Panc1 (cell line): ENCODE measurements at regions of chr2 and their contacts with region 1.

Region 1: DNA sequence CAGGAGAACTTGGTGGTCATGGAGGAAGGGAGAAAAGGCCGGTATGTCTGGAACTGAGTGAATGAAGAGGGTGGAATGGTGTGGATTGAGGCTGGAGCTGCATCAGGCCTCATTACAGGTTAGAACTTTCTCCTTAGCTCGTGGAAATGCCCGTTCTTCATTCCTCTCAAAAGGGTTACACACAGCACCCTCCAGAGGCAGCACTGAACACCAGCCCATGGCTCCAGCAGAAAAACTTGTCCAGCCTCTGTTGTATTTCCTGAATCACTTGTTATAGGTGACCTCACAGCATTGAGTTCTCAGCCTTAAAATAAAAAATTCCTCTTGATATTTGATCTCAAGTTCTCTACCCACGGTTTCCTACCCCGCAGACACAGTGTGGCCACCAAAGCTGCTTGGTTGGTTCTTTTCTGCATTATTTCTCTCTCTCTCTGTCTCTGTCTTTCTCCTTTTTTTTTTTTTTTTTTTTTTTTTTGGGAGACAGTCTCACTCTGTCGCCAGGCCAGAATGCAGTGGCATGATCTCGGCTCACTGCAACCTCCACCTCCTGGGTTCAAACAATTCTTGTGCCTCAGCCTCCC is 89.6 kb downstream of the ITGB1BP1 start:
- DNase-seq: peak; percentile 55
- ATAC-seq: peak; percentile 82
- H3K4me3 ChIP-seq: no peak overlapping the region
- H3K27ac ChIP-seq: peak overlapping the region; percentile 20
- H3K4me1 ChIP-seq: peaks cover 6% of the 10 kb centered on the region
- H3K27me3 ChIP-seq: no peaks in the 10 kb centered on the region
- CTCF ChIP-seq: peak; percentile 77

Region 2: GRCh38 chr2:9318461-9319337 is 15.0 kb before region 1 on chr2:
- CTCF ChIA-PET with region 1: interaction called, 14 read pairs
- POLR2A ChIA-PET with region 1: no interaction called
- in situ Hi-C with region 1: no loop called
- intact Hi-C with region 1: no loop called
- DNase-seq: no peak
- ATAC-seq: no peak
- H3K4me3 ChIP-seq: no peak overlapping the region
- H3K27ac ChIP-seq: no peak overlapping the region
- H3K4me1 ChIP-seq: 0 out of 2 replicates have a peak, but pooled peaks cover 3% of the 10 kb centered on the region
- H3K27me3 ChIP-seq: no peaks in the 10 kb centered on the region
- CTCF ChIP-seq: no peak

Region 3: GRCh38 chr2:9345343-9345742 is 11.7 kb after region 1 on chr2:
- CTCF ChIA-PET with region 1: no interaction called
- POLR2A ChIA-PET with region 1: interaction called, 13 read pairs
- in situ Hi-C with region 1: no loop called
- intact Hi-C with region 1: no loop called
- DNase-seq: no peak
- ATAC-seq: no peak
- H3K4me3 ChIP-seq: no peak overlapping the region
- H3K27ac ChIP-seq: no peak overlapping the region
- H3K4me1 ChIP-seq: no peaks in the 10 kb centered on the region
- H3K27me3 ChIP-seq: no peaks in the 10 kb centered on the region
- CTCF ChIP-seq: no peak